RWPE1 (cell line): ENCODE measurements at regions of chr3 and their contacts with region 1.

Region 1: GRCh38 chr3:197599089-197599765 is 43.5 kb upstream of the BDH1 start:
- DNase-seq: peak; percentile 73
- H3K27ac ChIP-seq: peak overlapping the region; percentile 65
- CTCF ChIP-seq: peak; percentile 94

Region 2: DNA sequence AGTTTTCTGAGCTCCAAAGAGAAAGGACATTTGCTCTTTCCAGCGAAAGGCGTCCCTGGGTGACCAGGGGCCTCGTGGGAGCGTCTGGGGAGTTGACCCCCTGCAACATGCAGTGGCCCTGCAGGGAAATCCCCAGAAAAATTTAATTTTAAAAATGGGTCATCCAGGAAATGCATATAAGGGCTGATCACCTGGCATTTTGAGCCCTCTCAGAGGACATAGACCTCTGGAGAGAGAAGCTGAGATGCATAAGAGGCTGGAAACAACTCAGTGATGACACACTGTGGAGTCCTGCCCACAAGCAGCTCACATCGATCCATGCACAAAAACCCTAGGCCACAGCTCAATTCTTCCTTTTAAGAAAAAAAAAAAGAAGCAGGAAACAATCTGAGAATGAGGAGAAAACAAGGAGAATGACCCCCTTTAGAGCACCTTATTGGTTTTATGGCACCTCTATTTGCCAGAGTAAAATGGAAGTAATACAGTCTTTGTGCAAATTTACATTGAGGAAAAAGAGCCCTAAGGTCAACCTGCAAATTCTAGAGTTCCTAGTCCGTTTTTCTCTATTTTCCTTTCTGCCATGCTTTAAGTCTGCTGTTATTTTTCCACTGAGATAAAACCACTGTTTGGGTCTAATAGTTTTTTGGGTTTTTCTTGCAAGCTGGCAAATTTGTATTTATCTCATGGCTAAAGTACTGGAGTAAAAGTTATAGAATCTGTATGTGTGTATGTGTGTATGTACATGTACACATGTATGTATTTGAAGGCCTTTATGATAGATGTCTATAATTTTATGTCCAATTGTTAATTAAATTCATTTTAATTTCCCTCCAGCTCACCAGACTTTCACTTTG is 36.6 kb before region 1 on chr3:
- CTCF ChIA-PET with region 1: interaction called, 11 read pairs
- POLR2A ChIA-PET with region 1: no interaction called
- DNase-seq: no peak
- H3K27ac ChIP-seq: no peak overlapping the region
- CTCF ChIP-seq: no peak

Region 3: GRCh38 chr3:197583371-197583770 is 15.9 kb before region 1 on chr3:
- CTCF ChIA-PET with region 1: interaction called, 11 read pairs
- POLR2A ChIA-PET with region 1: interaction called, 3 read pairs
- DNase-seq: no peak
- H3K27ac ChIP-seq: no peak overlapping the region
- CTCF ChIP-seq: no peak

Region 4: DNA sequence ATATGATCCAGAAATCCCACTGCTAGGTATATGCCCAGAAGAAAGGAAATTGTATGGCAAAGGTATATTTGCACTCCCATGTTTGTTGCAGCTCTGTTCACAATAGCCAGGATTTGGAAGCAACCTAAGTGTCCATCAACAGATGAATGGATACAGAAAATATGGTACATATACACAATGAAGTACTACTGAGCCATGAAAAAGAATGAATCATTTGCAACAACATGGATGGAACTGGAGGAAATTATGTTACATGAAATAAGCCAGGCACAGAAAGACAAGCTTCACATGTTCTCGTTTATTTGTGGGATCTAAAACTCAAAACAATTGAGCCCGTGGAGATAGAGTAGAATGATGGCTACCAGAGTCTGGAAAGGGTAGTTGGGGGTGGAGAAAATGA is 12.0 kb after region 1 on chr3:
- CTCF ChIA-PET with region 1: interaction called, 20 read pairs
- POLR2A ChIA-PET with region 1: no interaction called
- DNase-seq: no peak
- H3K27ac ChIP-seq: no peak overlapping the region
- CTCF ChIP-seq: no peak

Region 5: DNA sequence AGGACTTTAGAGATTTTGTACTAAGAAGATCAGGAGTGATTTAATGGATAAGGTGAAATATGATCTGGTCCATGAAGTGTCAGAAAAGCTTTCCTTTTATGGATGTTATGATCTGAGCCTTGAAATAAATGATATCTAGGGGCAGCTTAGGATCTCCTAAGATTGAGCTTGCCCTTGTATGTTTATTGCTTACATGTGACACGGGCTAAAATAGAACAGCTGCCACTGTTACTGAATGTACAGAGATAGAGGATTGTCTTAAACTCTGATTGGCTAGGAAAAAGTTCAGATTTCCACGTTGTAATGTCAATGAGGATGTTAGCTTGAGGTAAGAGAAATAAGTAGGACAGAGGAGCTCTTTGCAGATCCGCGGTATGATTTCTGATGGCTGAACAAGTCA is 159.3 kb after region 1 on chr3:
- CTCF ChIA-PET with region 1: no interaction called
- POLR2A ChIA-PET with region 1: no interaction called
- DNase-seq: no peak
- H3K27ac ChIP-seq: no peak overlapping the region
- CTCF ChIP-seq: no peak